CD8-positive, alpha-beta memory T cell (primary cell): ENCODE measurements at regions of chr1 and their contacts with region 1.

Region 1: DNA sequence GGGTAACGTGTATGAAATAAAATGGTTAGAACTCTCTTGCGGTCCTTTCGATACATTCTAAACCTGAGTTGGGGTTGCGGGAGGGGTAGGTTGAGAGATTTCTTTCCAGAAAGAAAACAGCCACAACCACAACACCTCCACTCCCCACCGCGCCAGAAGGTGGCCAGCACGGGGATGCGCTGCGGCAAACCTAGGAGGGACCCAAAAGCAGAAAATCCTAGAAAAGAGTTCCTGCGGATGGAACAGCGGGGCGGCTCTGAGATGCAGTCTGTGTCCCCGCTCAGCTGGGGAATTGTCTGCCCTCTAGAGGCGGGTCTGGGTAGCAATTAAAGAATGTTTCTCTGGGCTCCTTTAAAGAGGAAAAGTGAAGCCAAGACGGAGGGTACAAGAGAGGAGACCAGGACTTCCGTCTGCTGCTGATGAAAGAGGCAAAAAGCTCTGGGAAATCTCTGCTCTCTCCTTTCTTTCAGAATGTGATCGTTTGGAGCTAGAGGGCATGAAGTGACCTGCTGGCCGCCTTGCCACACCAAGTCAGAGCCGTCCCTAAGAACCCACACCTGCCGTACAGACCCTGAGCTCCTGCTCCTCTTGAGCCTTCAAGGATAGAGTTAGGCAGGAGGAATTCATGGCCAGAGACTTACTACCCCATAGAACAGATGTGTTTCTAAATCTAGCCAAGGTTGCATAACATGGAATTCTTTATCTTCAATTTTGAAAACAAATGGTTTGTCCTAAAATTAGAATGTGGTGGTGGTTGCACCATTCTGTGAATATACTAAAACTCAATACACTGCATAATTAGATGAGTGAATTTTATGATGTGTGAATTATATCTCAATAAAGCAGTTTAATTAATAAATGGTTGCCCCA is 46.5 kb upstream of the COA6 start:
- DNase-seq: peak; percentile 54 to 76 (median 57)
- H3K4me3 ChIP-seq: peak overlapping the region; percentile 70
- H3K4me3 Mint-ChIP-seq: peak overlapping the region; percentile 82 to 92 (median 87)
- H3K27ac ChIP-seq: peak overlapping the region; percentile 17
- H3K27ac Mint-ChIP-seq: peak overlapping the region in 7 of 8 donors; percentile 41 to 97 (median 75)
- H3K4me1 ChIP-seq: peaks cover 5% of the 10 kb centered on the region
- H3K4me1 Mint-ChIP-seq: peaks cover 11 to 32% (median 30%) of the 10 kb centered on the region in 3 donors
- H3K27me3 ChIP-seq: no peaks in the 10 kb centered on the region
- H3K27me3 Mint-ChIP-seq: peaks cover 7 to 42% of the 10 kb centered on the region in 2 donors

Region 2: GRCh38 chr1:234212764-234213657 is 113.7 kb before region 1 on chr1:
- CTCF ChIA-PET with region 1: interaction called, 16 read pairs
- POLR2A ChIA-PET with region 1: no interaction called
- DNase-seq: peak in 2 of 5 donors; percentile 11 to 17
- H3K4me3 ChIP-seq: no peak overlapping the region
- H3K4me3 Mint-ChIP-seq: peak overlapping the region in 5 of 7 donors; percentile 20 to 60 (median 43)
- H3K27ac ChIP-seq: no peak overlapping the region
- H3K27ac Mint-ChIP-seq: peak overlapping the region in 2 of 8 donors; percentile 4 to 29
- H3K4me1 ChIP-seq: no peaks in the 10 kb centered on the region
- H3K4me1 Mint-ChIP-seq: peaks cover 11 to 15% (median 14%) of the 10 kb centered on the region in 3 donors
- H3K27me3 ChIP-seq: no peaks in the 10 kb centered on the region
- H3K27me3 Mint-ChIP-seq: peaks cover 28 to 55% of the 10 kb centered on the region in 2 donors

Region 3: DNA sequence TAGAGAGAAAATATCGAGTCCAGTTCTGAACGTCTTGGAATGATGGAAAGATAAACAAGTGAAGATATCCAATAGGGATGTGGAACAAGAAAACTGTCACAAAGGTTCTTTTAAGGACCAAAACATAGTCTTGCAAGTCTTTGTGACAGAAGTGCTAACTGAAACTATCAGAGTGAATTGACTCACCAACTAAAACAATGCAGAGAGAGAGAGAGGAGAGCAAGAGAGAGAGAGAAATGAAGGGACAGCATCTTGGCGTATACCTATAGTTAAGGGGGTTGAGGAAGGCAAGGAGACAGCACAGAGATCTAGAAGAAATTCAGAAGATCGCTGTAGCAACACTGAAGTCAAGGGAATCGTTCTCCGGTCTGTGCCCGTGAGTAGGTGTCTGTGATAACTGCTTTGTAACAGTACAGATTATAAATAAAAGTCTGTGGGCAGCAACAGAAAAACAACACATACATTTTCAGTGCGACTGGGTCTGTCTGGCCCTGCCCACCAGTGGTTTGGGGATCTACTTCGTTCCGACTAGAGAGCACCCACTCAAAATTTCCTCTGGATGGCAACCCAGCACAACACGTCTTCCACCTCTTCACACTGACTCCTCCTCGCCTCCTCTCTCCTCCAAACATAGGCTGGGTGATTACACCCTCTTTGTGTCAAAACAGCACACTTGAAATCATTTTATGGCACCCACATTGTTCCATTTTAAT is 41.7 kb after region 1 on chr1:
- CTCF ChIA-PET with region 1: no interaction called
- POLR2A ChIA-PET with region 1: no interaction called
- DNase-seq: no peak
- H3K4me3 ChIP-seq: no peak overlapping the region
- H3K4me3 Mint-ChIP-seq: peak overlapping the region in 2 of 7 donors; percentile 15 to 27
- H3K27ac ChIP-seq: no peak overlapping the region
- H3K27ac Mint-ChIP-seq: peak overlapping the region in 4 of 8 donors; percentile 1 to 77 (median 30)
- H3K4me1 ChIP-seq: peaks cover 8% of the 10 kb centered on the region
- H3K4me1 Mint-ChIP-seq: peaks cover 23 to 32% (median 25%) of the 10 kb centered on the region in 3 donors
- H3K27me3 ChIP-seq: no peaks in the 10 kb centered on the region
- H3K27me3 Mint-ChIP-seq: no peaks in the 10 kb centered on the region

Region 4: DNA sequence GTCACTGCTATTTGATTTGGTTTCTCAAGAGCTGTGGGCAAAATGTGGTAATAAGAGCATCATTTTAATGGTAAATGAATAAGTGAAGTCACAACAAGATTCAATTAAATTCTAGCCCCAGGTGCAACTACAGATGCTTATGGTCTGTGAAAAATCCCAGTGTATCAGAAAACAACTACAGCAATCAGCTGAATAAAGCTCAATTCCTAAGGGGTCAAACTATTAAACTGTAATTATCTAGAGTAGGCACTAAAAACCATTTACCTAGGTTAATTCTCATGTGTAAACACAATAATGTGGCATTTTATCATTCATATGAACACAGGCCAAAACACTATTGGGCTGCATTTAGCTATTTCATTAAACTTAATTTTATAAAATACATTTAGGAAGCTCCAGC is 142.6 kb after region 1 on chr1:
- CTCF ChIA-PET with region 1: no interaction called
- POLR2A ChIA-PET with region 1: no interaction called
- DNase-seq: no peak
- H3K4me3 ChIP-seq: no peak overlapping the region
- H3K4me3 Mint-ChIP-seq: no peak overlapping the region
- H3K27ac ChIP-seq: no peak overlapping the region
- H3K27ac Mint-ChIP-seq: no peak overlapping the region
- H3K4me1 ChIP-seq: peaks cover 10% of the 10 kb centered on the region
- H3K4me1 Mint-ChIP-seq: peaks cover 13 to 23% (median 17%) of the 10 kb centered on the region in 3 donors
- H3K27me3 ChIP-seq: no peaks in the 10 kb centered on the region
- H3K27me3 Mint-ChIP-seq: no peaks in the 10 kb centered on the region